Spleen (tissue), 13 donors: ENCODE measurements at regions of chr16 and their contacts with region 1.

Region 1: DNA sequence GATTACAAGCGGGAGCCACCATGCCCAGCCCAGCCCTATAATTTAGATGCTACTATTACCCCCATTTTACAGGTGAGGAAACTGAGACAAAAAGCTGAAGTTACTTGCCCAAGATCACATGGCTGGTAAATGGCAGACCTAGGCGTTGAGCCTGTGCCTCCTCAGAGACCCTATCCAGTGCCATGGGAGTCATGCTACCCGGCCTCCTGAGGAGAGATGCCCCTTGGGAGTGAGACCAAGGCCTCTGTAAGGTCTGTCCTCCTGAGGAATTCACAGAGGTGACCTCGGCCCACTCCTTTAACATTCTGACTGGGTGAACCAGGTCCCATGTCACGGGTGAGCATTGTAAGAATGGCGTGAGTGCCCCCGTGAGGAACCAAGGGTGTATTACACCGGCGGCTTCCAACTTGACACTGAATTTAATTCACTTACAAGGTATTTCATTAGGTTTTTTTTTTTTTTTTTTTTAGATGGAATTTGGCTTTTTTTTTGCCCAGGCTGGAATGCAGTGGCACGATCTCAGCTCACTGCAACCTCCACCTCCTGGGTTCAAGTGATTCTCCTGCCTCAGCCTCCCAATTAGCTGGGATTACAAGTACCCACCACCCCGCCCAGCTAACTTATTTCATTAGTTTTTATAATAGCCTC is 95.7 kb downstream of the ABCC6 start:
- DNase-seq: peak; percentile 85
- H3K4me3 ChIP-seq: no peak overlapping the region
- H3K27ac ChIP-seq: peak overlapping the region in 1 of 8 donors; percentile 35
- H3K4me1 ChIP-seq: peaks cover 0 to 10% (median 3%) of the 10 kb centered on the region in 6 donors
- H3K27me3 ChIP-seq: no peaks in the 10 kb centered on the region
- CTCF ChIP-seq: peak; percentile 62 to 97 (median 85)
- POLR2A ChIP-seq: no peak

Region 2: DNA sequence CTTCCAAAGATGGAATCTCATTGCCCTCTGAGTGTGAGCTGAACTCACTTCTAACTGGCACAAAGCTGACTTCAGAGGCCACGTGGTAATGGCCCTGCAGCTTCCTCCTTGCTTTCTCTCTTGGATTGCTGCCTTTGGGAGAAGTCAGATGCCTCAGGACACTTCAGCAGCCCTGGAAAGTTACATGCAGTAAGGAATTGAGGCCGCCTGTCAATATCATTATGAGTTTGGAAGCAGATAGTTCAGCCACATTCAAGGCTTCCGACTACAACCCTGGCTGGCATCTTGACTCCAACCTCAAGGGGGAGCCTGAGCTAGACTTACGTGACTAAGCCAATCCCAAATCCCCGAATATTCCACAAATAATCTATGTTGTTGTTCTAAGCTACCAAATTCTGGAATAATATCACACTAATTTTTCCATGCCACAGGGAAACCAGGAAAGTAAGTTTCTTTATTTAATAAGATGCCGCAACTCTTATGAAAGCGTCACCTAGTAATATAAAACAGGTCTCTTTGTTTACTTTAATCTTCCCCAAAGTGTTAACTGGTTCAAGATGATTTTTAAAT is 252.8 kb before region 1 on chr16:
- intact Hi-C with region 1: loop called (anchors 5 kb)
- DNase-seq: no peak
- H3K4me3 ChIP-seq: no peak overlapping the region
- H3K27ac ChIP-seq: peak overlapping the region in 5 of 8 donors; percentile 7 to 41 (median 29)
- H3K4me1 ChIP-seq: peaks cover 0 to 22% (median 9%) of the 10 kb centered on the region in 6 donors
- H3K27me3 ChIP-seq: no peaks in the 10 kb centered on the region
- CTCF ChIP-seq: peak in 10 of 11 experiments; percentile 18 to 73 (median 56)
- POLR2A ChIP-seq: no peak

Region 3: DNA sequence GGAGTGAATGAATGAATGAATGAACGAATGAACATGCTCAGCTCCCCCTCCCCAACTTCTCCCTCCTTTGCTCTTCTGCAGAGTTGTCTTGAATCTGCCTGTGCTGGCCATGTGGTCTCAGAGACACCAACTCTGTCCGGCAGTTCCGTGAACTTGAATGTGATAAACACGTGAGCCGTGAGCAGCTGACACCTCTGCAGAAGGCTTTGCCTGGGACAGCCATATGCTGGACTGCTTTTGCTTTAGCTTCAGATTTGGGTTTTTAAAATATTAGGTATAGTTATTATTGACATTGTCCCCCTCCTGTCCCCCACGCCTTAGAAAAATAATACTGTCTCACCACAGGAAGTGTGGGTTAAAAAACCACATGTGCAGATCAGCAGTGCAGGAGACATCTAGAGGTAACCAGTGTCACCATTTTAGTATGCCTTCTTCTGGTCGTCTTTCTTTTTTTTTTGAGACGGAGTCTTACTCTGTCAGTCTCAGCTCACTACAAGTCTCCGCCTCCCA is 94.3 kb before region 1 on chr16:
- intact Hi-C with region 1: no loop called
- DNase-seq: no peak
- H3K4me3 ChIP-seq: no peak overlapping the region
- H3K27ac ChIP-seq: peak overlapping the region; percentile 1 to 74 (median 54)
- H3K4me1 ChIP-seq: peaks cover 3 to 47% (median 15%) of the 10 kb centered on the region in 6 donors
- H3K27me3 ChIP-seq: no peaks in the 10 kb centered on the region
- CTCF ChIP-seq: no peak
- POLR2A ChIP-seq: no peak